Naive thymus-derived CD4-positive, alpha-beta T cell (primary cell): ENCODE measurements at regions of chr1 and their contacts with region 1.

Region 1: DNA sequence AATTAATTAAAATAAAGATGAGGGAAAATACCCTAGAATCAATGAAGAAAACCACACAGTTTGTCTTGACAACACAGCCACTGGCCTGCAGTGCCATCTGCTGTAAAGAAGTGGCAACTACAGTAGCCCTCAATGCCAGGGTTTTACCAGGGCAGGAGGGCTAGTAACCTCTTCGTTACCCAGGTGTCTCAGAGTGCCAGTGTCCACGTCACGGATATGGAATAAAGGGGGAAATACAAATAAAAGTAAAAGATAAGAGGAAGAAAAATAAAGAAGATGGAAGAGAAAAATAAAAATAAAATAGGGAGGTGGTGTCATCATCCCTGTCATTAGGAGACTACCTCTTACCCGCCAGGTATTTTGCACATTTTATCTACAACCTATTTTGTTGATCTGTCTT is 14.2 kb upstream of the SLC44A3 start:
- DNase-seq: peak in 7 of 9 donors; percentile 16 to 51 (median 39)
- ATAC-seq: peak; percentile 79
- H3K4me3 ChIP-seq: no peak overlapping the region
- H3K4me3 Mint-ChIP-seq: no peak overlapping the region
- H3K27ac ChIP-seq: no peak overlapping the region
- H3K27ac Mint-ChIP-seq: peak overlapping the region in 1 of 9 donors; percentile 55
- H3K4me1 ChIP-seq: no peaks in the 10 kb centered on the region
- H3K4me1 Mint-ChIP-seq: peaks cover 0 to 19% (median 6%) of the 10 kb centered on the region in 7 donors
- H3K27me3 ChIP-seq: no peaks in the 10 kb centered on the region
- H3K27me3 Mint-ChIP-seq: peaks cover 0 to 19% (median 9%) of the 10 kb centered on the region in 5 donors

Region 2: GRCh38 chr1:93629099-93630059 is 1176.5 kb before region 1 on chr1:
- CTCF ChIA-PET with region 1: no interaction called
- POLR2A ChIA-PET with region 1: no interaction called
- intact Hi-C with region 1: loop called in 1 of 2 experiments (anchors 1 kb)
- DNase-seq: peak in 8 of 9 donors; percentile 22 to 69 (median 56)
- ATAC-seq: peak; percentile 89
- H3K4me3 ChIP-seq: no peak overlapping the region
- H3K4me3 Mint-ChIP-seq: no peak overlapping the region
- H3K27ac ChIP-seq: no peak overlapping the region
- H3K27ac Mint-ChIP-seq: no peak overlapping the region
- H3K4me1 ChIP-seq: no peaks in the 10 kb centered on the region
- H3K4me1 Mint-ChIP-seq: no peaks in the 10 kb centered on the region
- H3K27me3 ChIP-seq: no peaks in the 10 kb centered on the region
- H3K27me3 Mint-ChIP-seq: peaks cover 0 to 10% (median 0%) of the 10 kb centered on the region in 5 donors

Region 3: GRCh38 chr1:94025383-94026340 is 780.2 kb before region 1 on chr1:
- CTCF ChIA-PET with region 1: no interaction called
- POLR2A ChIA-PET with region 1: no interaction called
- intact Hi-C with region 1: loop called in 1 of 2 experiments (anchors 1 kb)
- DNase-seq: peak in 5 of 9 donors; percentile 5 to 19 (median 11)
- ATAC-seq: no peak
- H3K4me3 ChIP-seq: no peak overlapping the region
- H3K4me3 Mint-ChIP-seq: no peak overlapping the region
- H3K27ac ChIP-seq: no peak overlapping the region
- H3K27ac Mint-ChIP-seq: no peak overlapping the region
- H3K4me1 ChIP-seq: no peaks in the 10 kb centered on the region
- H3K4me1 Mint-ChIP-seq: peaks cover 0 to 12% (median 0%) of the 10 kb centered on the region in 7 donors
- H3K27me3 ChIP-seq: peaks cover 0 to 4% of the 10 kb centered on the region in 2 donors
- H3K27me3 Mint-ChIP-seq: peaks cover 6 to 8% (median 7%) of the 10 kb centered on the region in 5 donors

Region 4: GRCh38 chr1:94045465-94046056 is 760.4 kb before region 1 on chr1:
- CTCF ChIA-PET with region 1: interaction called, 5 read pairs
- POLR2A ChIA-PET with region 1: no interaction called
- intact Hi-C with region 1: loop called (anchors 1 to 5 kb)
- DNase-seq: peak in 6 of 9 donors; percentile 14 to 39 (median 20)
- ATAC-seq: peak; percentile 56
- H3K4me3 ChIP-seq: no peak overlapping the region
- H3K4me3 Mint-ChIP-seq: peak overlapping the region in 9 of 10 donors; percentile 25 to 77 (median 68)
- H3K27ac ChIP-seq: no peak overlapping the region
- H3K27ac Mint-ChIP-seq: no peak overlapping the region
- H3K4me1 ChIP-seq: no peaks in the 10 kb centered on the region
- H3K4me1 Mint-ChIP-seq: peaks cover 0 to 10% (median 5%) of the 10 kb centered on the region in 7 donors
- H3K27me3 ChIP-seq: no peaks in the 10 kb centered on the region
- H3K27me3 Mint-ChIP-seq: peaks cover 0 to 28% (median 24%) of the 10 kb centered on the region in 5 donors

Region 5: DNA sequence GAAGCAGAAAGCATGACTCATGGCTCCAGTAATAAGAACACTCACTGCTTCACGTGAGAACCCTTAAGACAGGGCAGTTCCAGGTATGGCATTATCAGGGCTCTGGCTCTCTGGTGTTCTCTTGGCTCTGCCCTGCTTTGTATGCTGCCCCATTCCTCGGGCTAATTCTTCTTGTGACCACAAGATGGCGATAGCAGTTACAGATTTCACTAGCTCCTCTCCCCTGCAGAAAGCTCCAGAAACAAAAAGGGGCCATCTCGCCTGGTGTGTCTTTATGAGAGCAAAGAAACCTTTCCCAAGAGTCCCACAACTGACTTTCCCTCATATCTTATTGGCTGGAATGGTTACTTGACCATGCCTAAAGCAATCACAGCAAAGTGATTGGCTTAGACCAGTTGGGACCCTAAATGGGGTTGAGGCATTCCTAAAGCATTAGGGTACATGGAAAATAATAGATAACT is 324.4 kb before region 1 on chr1:
- CTCF ChIA-PET with region 1: interaction called, 12 read pairs
- POLR2A ChIA-PET with region 1: no interaction called
- intact Hi-C with region 1: loop called (anchors 1 kb)
- DNase-seq: peak in 7 of 9 donors; percentile 5 to 51 (median 33)
- ATAC-seq: peak; percentile 85
- H3K4me3 ChIP-seq: no peak overlapping the region
- H3K4me3 Mint-ChIP-seq: no peak overlapping the region
- H3K27ac ChIP-seq: no peak overlapping the region
- H3K27ac Mint-ChIP-seq: peak overlapping the region in 1 of 9 donors; percentile 55
- H3K4me1 ChIP-seq: no peaks in the 10 kb centered on the region
- H3K4me1 Mint-ChIP-seq: peaks cover 0 to 2% (median 0%) of the 10 kb centered on the region in 7 donors
- H3K27me3 ChIP-seq: no peaks in the 10 kb centered on the region
- H3K27me3 Mint-ChIP-seq: no peaks in the 10 kb centered on the region

Region 6: GRCh38 chr1:94602316-94602715 is 203.6 kb before region 1 on chr1:
- CTCF ChIA-PET with region 1: no interaction called
- POLR2A ChIA-PET with region 1: no interaction called
- intact Hi-C with region 1: loop called in 1 of 2 experiments (anchors 10 kb)
- DNase-seq: peak in 1 of 9 donors; percentile 23
- ATAC-seq: peak; percentile 81
- H3K4me3 ChIP-seq: no peak overlapping the region
- H3K4me3 Mint-ChIP-seq: peak overlapping the region in 3 of 10 donors; percentile 2 to 86 (median 24)
- H3K27ac ChIP-seq: no peak overlapping the region
- H3K27ac Mint-ChIP-seq: peak overlapping the region in 1 of 9 donors; percentile 82
- H3K4me1 ChIP-seq: no peaks in the 10 kb centered on the region
- H3K4me1 Mint-ChIP-seq: peaks cover 0 to 22% (median 7%) of the 10 kb centered on the region in 7 donors
- H3K27me3 ChIP-seq: no peaks in the 10 kb centered on the region
- H3K27me3 Mint-ChIP-seq: peaks cover 34 to 55% (median 40%) of the 10 kb centered on the region in 5 donors